ENCODE measurements at regions of chr6 and their contacts with region 1.

Region 1: DNA sequence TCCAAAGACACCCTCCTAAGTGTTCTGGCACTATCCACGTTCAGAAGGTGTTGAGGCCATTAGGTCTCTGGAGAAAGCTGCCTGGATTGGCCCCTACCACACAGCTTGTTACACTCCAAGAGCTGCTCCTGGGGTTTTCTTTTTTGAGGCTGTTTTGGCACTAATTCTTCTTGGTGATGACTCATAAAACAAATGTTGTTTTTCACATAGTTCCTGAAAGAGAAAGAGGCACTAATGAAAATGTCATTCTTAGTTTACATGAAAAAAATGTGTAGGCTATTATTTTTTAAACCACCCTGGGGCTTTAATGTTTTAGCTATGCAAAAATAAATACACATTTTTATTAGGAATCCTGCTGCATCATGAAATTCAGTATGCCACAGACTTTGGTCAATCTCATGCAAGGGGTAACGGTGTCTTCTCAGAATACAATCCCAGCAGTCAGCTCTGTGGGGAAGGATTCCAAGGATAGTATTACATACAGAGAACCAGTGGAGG is 38.1 kb downstream of the TBPL1 start:
- DNase-seq: no peak
- ATAC-seq: peak in 1 of 8 donors; percentile 39
- H3K4me3 ChIP-seq: no peak overlapping the region
- H3K27ac ChIP-seq: no peak overlapping the region
- H3K4me1 ChIP-seq: peaks cover 0 to 30% (median 16%) of the 10 kb centered on the region in 9 donors
- H3K27me3 ChIP-seq: no peaks in the 10 kb centered on the region
- CTCF ChIP-seq: no peak

Region 2: GRCh38 chr6:134047673-134048072 is 56.5 kb after region 1 on chr6:
- intact Hi-C with region 1: loop called in 1 of 10 experiments (anchors 5 kb)
- DNase-seq: peak; percentile 44 to 55
- ATAC-seq: peak; percentile 63 to 91 (median 84)
- H3K4me3 ChIP-seq: no peak overlapping the region
- H3K27ac ChIP-seq: peak overlapping the region in 7 of 10 donors; percentile 22 to 65 (median 61)
- H3K4me1 ChIP-seq: peaks cover 0 to 43% (median 11%) of the 10 kb centered on the region in 9 donors
- H3K27me3 ChIP-seq: no peaks in the 10 kb centered on the region
- CTCF ChIP-seq: no peak

Measured in heart right ventricle (tissue), 16 donors.